MCF 10A (cell line): ENCODE measurements at regions of chr1 and their contacts with region 1.

Region 1: DNA sequence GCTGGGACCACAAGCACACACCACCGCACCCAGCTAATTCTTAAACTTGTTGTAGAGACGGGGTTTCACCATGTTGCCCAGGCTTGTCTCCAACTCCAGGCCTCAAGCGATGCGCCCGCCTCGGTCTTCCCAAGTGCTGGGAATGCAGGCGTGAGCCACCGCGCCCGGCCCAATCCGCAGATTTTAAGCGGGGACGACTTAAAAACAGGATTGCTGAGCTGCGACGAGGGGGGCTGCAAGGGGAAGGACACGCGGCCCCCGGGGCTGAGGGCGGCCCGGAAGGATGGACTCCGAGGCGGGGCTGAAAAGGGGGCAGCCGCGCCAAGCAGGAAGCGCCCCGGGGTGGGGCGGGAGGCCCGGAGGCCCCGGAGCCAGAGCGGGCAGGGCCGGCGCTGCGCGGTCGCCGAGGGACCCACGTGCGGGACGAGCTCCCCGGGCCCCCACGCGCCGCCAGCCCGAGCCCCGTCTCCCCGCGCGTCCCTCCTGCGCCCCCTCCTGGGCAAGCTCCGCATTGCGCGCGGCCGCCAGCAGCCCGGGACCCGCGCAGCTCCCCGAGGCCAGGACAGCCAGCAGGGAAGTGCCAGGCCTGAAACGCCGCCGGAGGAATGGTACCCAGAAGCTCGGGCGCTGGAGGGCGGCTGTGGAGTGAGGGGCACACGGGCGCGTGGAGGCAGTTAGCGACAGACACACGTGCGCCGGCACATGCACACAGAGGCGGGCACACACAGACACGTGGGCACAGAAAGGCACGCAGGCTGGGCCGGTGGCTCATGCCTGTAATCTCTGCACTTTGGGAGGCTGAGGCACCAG is 5.5 kb upstream of the PRKCZ start:
- DNase-seq: peak; percentile 56
- H3K4me3 Mint-ChIP-seq: no peak overlapping the region
- H3K27ac Mint-ChIP-seq: no peak overlapping the region
- H3K4me1 Mint-ChIP-seq: peaks cover 5% of the 10 kb centered on the region
- H3K27me3 Mint-ChIP-seq: no peaks in the 10 kb centered on the region
- CTCF ChIP-seq: peak; percentile 88

Region 2: GRCh38 chr1:1796466-1796865 is 248.2 kb before region 1 on chr1:
- CTCF ChIA-PET with region 1: no interaction called
- POLR2A ChIA-PET with region 1: no interaction called
- intact Hi-C with region 1: no loop called
- DNase-seq: no peak
- H3K4me3 Mint-ChIP-seq: no peak overlapping the region
- H3K27ac Mint-ChIP-seq: no peak overlapping the region
- H3K4me1 Mint-ChIP-seq: no peaks in the 10 kb centered on the region
- H3K27me3 Mint-ChIP-seq: no peaks in the 10 kb centered on the region
- CTCF ChIP-seq: no peak

Region 3: GRCh38 chr1:1858382-1859086 is 186.2 kb before region 1 on chr1:
- CTCF ChIA-PET with region 1: no interaction called
- POLR2A ChIA-PET with region 1: no interaction called
- intact Hi-C with region 1: no loop called
- DNase-seq: peak; percentile 54
- H3K4me3 Mint-ChIP-seq: no peak overlapping the region
- H3K27ac Mint-ChIP-seq: peak overlapping the region; percentile 77
- H3K4me1 Mint-ChIP-seq: peaks cover 35% of the 10 kb centered on the region
- H3K27me3 Mint-ChIP-seq: no peaks in the 10 kb centered on the region
- CTCF ChIP-seq: no peak

Region 4: DNA sequence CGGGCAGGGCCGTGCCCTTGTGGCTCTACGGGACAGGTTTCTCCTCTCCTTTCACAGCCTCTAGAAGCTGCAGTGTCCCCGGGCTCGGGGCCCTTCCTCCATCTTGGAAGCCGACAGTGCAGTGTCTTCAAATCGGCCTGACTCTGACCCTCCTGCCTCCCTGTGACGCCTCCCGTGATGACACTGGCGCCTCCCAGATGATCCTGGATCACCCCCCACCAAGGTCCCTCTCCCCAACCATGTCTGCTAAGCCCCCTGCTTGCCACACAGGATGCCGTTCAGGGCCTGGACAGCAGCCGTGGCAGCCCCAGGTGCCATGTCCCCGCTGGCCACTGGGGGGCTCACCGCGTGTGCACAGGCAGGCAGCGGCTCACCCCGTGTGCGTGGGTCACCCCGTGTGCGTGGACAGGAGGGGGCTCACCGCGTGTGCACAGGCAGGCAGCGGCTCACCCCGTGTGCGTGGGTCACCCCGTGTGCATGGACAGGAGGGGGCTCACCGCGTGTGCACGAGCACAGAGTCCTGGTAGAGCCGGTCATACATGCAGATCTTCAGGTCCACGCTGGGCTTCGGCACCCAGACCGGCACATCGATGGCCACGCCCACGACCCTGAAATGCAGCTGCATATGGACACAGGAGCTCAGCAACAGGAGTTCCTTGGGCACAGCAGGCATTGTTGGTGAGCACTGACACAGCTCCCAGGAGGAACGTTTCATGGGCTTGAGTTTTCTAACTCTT is 100.7 kb before region 1 on chr1:
- CTCF ChIA-PET with region 1: interaction called, 118 read pairs
- POLR2A ChIA-PET with region 1: no interaction called
- intact Hi-C with region 1: loop called (anchors 1 kb)
- DNase-seq: peak; percentile 27
- H3K4me3 Mint-ChIP-seq: no peak overlapping the region
- H3K27ac Mint-ChIP-seq: no peak overlapping the region
- H3K4me1 Mint-ChIP-seq: no peaks in the 10 kb centered on the region
- H3K27me3 Mint-ChIP-seq: peaks cover 24% of the 10 kb centered on the region
- CTCF ChIP-seq: peak; percentile 89

Region 5: GRCh38 chr1:1959840-1960479 is 84.8 kb before region 1 on chr1:
- CTCF ChIA-PET with region 1: interaction called, 129 read pairs
- POLR2A ChIA-PET with region 1: interaction called, 8 read pairs
- intact Hi-C with region 1: loop called (anchors 1 kb)
- DNase-seq: peak; percentile 88
- H3K4me3 Mint-ChIP-seq: no peak overlapping the region
- H3K27ac Mint-ChIP-seq: no peak overlapping the region
- H3K4me1 Mint-ChIP-seq: peaks cover 10% of the 10 kb centered on the region
- H3K27me3 Mint-ChIP-seq: peaks cover 37% of the 10 kb centered on the region
- CTCF ChIP-seq: peak; percentile 91

Region 6: DNA sequence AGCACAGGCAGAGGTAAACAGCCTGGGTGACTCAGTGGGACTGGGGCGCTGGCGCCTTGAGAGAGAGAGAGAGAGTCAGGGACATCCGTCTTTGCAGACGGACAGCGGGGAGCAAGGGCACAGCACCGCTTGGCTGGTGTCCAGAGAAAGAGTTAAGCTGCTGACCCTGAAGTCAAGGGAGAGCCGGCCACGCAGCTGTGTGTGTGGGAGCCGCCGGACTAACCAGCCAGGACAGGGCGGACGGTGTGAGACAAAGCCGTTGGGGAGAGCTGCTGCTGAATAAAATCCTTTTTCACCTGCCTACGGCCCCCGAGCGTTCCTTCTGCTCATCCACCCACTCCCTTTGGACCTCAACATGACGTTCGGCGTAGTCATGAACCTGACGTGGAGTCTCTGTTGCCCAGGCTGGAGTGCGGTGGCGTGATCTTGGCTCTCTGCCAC is 55.6 kb before region 1 on chr1:
- CTCF ChIA-PET with region 1: interaction called, 13 read pairs
- POLR2A ChIA-PET with region 1: no interaction called
- intact Hi-C with region 1: no loop called
- DNase-seq: peak; percentile 56
- H3K4me3 Mint-ChIP-seq: no peak overlapping the region
- H3K27ac Mint-ChIP-seq: no peak overlapping the region
- H3K4me1 Mint-ChIP-seq: peaks cover 9% of the 10 kb centered on the region
- H3K27me3 Mint-ChIP-seq: peaks cover 19% of the 10 kb centered on the region
- CTCF ChIP-seq: no peak

Region 7: DNA sequence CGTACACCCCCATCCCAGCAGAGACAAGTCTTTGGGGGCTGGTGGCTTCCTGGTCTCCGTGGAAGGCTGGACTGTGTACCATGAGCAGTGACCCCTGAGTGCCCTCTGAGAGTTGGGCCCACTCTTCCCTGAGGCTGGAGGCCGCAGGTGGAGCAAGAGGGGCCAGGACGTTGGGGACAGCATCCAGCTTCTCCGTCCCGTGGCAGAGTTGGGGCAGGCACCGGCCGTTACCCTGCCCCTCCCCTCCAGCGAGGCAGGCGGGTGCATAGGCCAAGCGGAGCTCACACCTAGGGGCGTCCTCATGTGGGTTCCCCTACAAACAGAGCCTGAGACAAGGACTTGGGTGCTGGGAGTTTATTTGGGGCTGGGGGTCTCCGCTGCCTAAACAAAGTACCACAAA is 11.6 kb before region 1 on chr1:
- CTCF ChIA-PET with region 1: interaction called, 19 read pairs
- POLR2A ChIA-PET with region 1: no interaction called
- intact Hi-C with region 1: no loop called
- DNase-seq: no peak
- H3K4me3 Mint-ChIP-seq: no peak overlapping the region
- H3K27ac Mint-ChIP-seq: no peak overlapping the region
- H3K4me1 Mint-ChIP-seq: no peaks in the 10 kb centered on the region
- H3K27me3 Mint-ChIP-seq: no peaks in the 10 kb centered on the region
- CTCF ChIP-seq: no peak

Region 8: GRCh38 chr1:2055911-2056575 is 11.3 kb after region 1 on chr1:
- CTCF ChIA-PET with region 1: interaction called, 15 read pairs
- POLR2A ChIA-PET with region 1: no interaction called
- intact Hi-C with region 1: no loop called
- DNase-seq: no peak
- H3K4me3 Mint-ChIP-seq: no peak overlapping the region
- H3K27ac Mint-ChIP-seq: no peak overlapping the region
- H3K4me1 Mint-ChIP-seq: peaks cover 6% of the 10 kb centered on the region
- H3K27me3 Mint-ChIP-seq: no peaks in the 10 kb centered on the region
- CTCF ChIP-seq: no peak